Heart left ventricle (tissue), 16 donors: ENCODE measurements at regions of chr3 and their contacts with region 1.

Region 1: DNA sequence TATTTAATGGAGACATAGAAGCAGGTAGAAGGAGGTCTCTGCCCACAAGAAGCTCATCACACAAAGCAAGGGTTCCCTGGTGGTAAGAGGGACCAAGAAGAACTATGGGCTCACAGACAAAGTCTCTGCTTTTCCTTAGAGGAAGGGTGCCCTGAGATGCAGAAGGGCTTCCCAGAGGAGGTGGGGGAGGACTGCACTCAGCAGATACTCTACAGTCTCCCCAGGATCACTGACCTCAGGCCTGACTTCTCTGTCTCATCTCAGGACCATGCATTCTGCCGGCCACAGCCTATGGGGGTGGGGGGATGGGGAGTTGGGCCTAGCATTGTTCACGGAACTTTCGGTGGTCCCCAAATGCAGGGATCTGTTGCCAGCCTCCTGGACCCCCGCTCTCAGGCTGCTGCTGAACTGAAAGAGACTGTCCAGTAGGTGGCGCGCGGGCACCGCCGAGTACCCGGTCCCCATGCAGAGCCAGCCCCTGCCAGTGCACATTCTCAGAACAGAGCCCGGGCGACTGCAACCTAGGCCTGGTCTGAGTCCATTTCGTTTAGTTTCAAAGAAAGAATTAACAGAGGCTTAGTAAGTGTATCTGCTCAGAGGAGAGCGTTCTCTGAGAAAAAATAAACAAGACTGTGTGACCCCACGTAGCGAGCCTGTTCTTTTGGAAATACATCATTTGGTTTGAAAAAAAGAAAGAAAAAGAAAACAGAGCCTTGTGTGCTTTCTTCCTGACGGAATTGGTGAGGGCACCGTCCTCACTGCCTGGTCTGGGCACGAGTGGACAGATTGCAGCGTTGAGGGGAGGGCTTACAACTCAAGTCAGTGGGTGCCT is 74.1 kb downstream of the LRTM1 start:
- DNase-seq: peak; percentile 66 to 84 (median 73)
- ATAC-seq: peak; percentile 75 to 97 (median 91)
- H3K4me3 ChIP-seq: no peak overlapping the region
- H3K27ac ChIP-seq: no peak overlapping the region
- H3K4me1 ChIP-seq: peaks cover 0 to 9% (median 0%) of the 10 kb centered on the region in 12 donors
- H3K27me3 ChIP-seq: peaks cover 0 to 3% (median 0%) of the 10 kb centered on the region in 9 donors
- CTCF ChIP-seq: peak; percentile 70 to 86 (median 82)
- POLR2A ChIP-seq: no peak

Region 2: DNA sequence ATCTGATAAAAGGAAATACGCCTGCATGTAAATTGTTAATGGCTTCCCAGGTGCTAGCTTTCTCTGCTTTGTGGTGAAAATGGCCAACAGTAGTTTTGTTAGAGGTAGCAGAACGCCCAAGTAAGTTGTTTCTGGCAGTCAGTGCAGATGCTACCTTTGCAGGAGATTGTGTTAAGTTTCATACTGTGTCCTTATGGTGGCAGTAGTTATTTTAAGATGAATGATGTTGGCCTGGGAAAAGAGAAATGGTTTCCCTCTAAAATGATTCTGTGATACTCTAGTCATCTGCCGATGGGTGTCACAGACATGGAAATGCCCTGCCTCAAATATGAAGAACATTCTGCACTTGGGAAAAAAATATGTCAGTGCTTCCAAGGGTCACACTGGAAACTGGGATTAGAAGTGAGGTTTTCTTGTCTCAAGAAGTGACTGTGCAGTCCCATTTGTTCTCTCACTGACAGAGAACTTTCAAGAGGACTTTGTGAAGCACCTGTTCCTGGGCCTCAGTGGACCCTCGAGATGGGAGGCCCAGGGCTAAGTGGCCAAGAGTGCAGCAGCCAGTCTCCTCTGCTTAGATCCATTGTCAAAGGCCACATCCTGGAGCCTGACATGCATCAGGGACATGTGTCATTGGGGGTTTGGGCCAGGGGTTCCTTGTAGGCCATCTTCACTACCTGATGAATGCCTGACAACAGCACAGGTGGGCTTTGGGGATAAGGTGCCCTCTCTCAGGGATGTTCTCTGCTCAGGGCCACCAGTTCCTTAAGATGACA is 338.2 kb before region 1 on chr3:
- intact Hi-C with region 1: loop called in 1 of 10 experiments (anchors 10 kb)
- DNase-seq: no peak
- ATAC-seq: no peak
- H3K4me3 ChIP-seq: no peak overlapping the region
- H3K27ac ChIP-seq: no peak overlapping the region
- H3K4me1 ChIP-seq: no peaks in the 10 kb centered on the region
- H3K27me3 ChIP-seq: no peaks in the 10 kb centered on the region
- CTCF ChIP-seq: peak in 1 of 12 donors; percentile 12
- POLR2A ChIP-seq: no peak

Region 3: GRCh38 chr3:55169608-55170010 is 315.8 kb after region 1 on chr3:
- intact Hi-C with region 1: loop called in 3 of 10 experiments (anchors 10 kb)
- DNase-seq: no peak
- ATAC-seq: no peak
- H3K4me3 ChIP-seq: no peak overlapping the region
- H3K27ac ChIP-seq: no peak overlapping the region
- H3K4me1 ChIP-seq: no peaks in the 10 kb centered on the region
- H3K27me3 ChIP-seq: no peaks in the 10 kb centered on the region
- CTCF ChIP-seq: no peak
- POLR2A ChIP-seq: no peak

Region 4: GRCh38 chr3:55485211-55485791 is 631.5 kb after region 1 on chr3:
- intact Hi-C with region 1: loop called in 2 of 10 experiments (anchors 10 kb)
- DNase-seq: peak; percentile 69 to 87 (median 75)
- ATAC-seq: peak; percentile 64 to 83 (median 83)
- H3K4me3 ChIP-seq: peak overlapping the region; percentile 37 to 92 (median 66)
- H3K27ac ChIP-seq: peak overlapping the region in 10 of 12 donors; percentile 2 to 73 (median 61)
- H3K4me1 ChIP-seq: peaks cover 0 to 71% (median 13%) of the 10 kb centered on the region in 12 donors
- H3K27me3 ChIP-seq: peaks cover 4 to 90% (median 12%) of the 10 kb centered on the region in 9 donors
- CTCF ChIP-seq: peak; percentile 51 to 86 (median 72)
- POLR2A ChIP-seq: no peak

Region 5: GRCh38 chr3:55654123-55654760 is 800.5 kb after region 1 on chr3:
- intact Hi-C with region 1: no loop called
- DNase-seq: no peak
- ATAC-seq: no peak
- H3K4me3 ChIP-seq: no peak overlapping the region
- H3K27ac ChIP-seq: no peak overlapping the region
- H3K4me1 ChIP-seq: no peaks in the 10 kb centered on the region
- H3K27me3 ChIP-seq: no peaks in the 10 kb centered on the region
- CTCF ChIP-seq: no peak
- POLR2A ChIP-seq: no peak

Region 6: GRCh38 chr3:56251343-56251945 is 1397.7 kb after region 1 on chr3:
- intact Hi-C with region 1: loop called in 7 of 10 experiments (anchors 5 to 10 kb)
- DNase-seq: peak in 1 of 5 donors; percentile 7
- ATAC-seq: no peak
- H3K4me3 ChIP-seq: no peak overlapping the region
- H3K27ac ChIP-seq: no peak overlapping the region
- H3K4me1 ChIP-seq: peaks cover 0 to 4% (median 0%) of the 10 kb centered on the region in 12 donors
- H3K27me3 ChIP-seq: peaks cover 0 to 3% (median 0%) of the 10 kb centered on the region in 9 donors
- CTCF ChIP-seq: peak; percentile 53 to 84 (median 72)
- POLR2A ChIP-seq: no peak